ENCODE measurements at regions of chr11 and their contacts with region 1.

Region 1: GRCh38 chr11:128290106-128290840 is 297.1 kb downstream of the ETS1 start:
- DNase-seq: peak; percentile 69
- H3K4me3 Mint-ChIP-seq: peak overlapping the region; percentile 84
- H3K27ac Mint-ChIP-seq: peak overlapping the region; percentile 95
- H3K4me1 Mint-ChIP-seq: peaks cover 93% of the 10 kb centered on the region
- H3K27me3 Mint-ChIP-seq: no peaks in the 10 kb centered on the region

Region 2: GRCh38 chr11:127627629-127628457 is 662.4 kb before region 1 on chr11:
- intact Hi-C with region 1: no loop called
- DNase-seq: no peak
- H3K4me3 Mint-ChIP-seq: no peak overlapping the region
- H3K27ac Mint-ChIP-seq: no peak overlapping the region
- H3K4me1 Mint-ChIP-seq: no peaks in the 10 kb centered on the region
- H3K27me3 Mint-ChIP-seq: no peaks in the 10 kb centered on the region

Region 3: DNA sequence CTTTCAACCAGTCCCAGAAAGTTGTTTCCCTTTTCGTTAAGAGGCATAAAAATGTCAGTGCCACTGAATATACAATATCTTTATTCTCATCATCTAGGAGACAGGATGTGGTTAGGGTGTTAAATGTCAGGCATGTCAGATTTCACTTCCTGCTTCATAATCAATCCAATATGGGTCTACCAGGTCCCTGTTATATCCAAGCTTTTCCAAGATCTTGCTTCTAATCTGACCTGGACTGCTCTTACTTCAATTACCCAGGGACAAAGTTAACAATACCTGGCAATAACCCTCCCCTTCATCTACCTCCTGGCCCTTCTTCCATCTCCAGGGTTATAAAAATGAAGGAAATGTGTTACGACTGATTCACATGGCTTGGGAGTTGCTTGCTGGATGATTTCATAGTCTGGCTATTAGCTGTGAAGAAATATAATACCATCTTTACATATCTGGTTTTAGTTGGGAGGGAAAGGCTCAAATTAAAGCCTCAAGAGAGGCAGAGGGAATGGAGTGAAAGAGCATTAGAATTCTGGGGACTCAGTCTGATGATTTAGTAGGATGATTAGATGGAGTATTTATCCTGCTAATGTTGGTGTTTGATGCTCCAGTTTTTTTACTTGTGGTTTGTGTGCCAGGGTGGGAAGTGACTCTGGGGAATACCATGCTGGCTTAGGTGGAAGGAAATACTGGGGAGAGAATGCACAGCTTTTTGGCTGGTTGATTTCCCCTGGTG is 237.2 kb before region 1 on chr11:
- intact Hi-C with region 1: loop called (anchors 5 kb)
- DNase-seq: no peak
- H3K4me3 Mint-ChIP-seq: peak overlapping the region; percentile 48
- H3K27ac Mint-ChIP-seq: peak overlapping the region; percentile 76
- H3K4me1 Mint-ChIP-seq: peaks cover 56% of the 10 kb centered on the region
- H3K27me3 Mint-ChIP-seq: no peaks in the 10 kb centered on the region

Region 4: GRCh38 chr11:128195057-128195751 is 95.1 kb before region 1 on chr11:
- intact Hi-C with region 1: loop called (anchors 1 kb)
- DNase-seq: peak; percentile 26
- H3K4me3 Mint-ChIP-seq: no peak overlapping the region
- H3K27ac Mint-ChIP-seq: peak overlapping the region; percentile 29
- H3K4me1 Mint-ChIP-seq: peaks cover 42% of the 10 kb centered on the region
- H3K27me3 Mint-ChIP-seq: peaks cover 1% of the 10 kb centered on the region

Region 5: DNA sequence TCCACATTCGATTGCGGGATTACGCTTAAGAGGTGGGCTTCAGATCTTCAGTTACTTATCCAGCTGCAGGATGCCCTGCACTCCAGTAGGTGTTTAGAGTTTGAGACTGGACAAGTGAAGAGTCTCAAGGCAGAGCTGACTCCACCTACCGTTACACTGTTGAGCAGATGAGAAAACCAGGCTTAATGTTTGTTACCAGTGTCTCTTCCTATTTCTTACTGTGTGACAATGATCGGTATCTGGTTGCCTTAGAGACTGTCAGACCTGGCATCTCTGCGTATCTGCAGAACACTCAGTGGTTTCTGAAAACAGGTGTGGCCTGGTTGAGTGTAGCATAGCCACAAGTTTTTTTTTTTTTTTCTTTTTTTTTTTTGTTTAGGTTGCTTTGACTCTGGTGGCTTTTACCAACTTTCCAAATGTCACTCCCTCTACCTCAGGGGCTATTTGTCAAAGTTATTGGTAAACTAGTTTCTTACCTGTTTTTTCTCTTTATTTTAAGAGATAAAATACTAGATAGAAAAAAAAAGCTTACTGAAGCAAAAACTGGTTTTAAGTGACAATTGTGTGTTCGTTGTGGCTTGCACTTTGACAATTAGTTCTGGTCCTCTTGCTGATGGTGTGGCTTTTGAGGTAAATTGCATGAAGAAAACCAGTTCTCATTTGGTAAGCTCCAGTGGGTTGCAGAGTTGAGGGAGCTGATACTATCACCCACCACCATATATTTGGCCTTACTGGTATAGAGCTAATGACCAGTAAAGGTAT is 12.3 kb after region 1 on chr11:
- intact Hi-C with region 1: loop called (anchors 1 kb)
- DNase-seq: peak; percentile 82
- H3K4me3 Mint-ChIP-seq: peak overlapping the region; percentile 90
- H3K27ac Mint-ChIP-seq: peak overlapping the region; percentile 96
- H3K4me1 Mint-ChIP-seq: peaks cover 71% of the 10 kb centered on the region
- H3K27me3 Mint-ChIP-seq: no peaks in the 10 kb centered on the region

Region 6: GRCh38 chr11:128472128-128473089 is 182.1 kb after region 1 on chr11:
- intact Hi-C with region 1: loop called (anchors 1 kb)
- DNase-seq: peak; percentile 62
- H3K4me3 Mint-ChIP-seq: peak overlapping the region; percentile 75
- H3K27ac Mint-ChIP-seq: peak overlapping the region; percentile 95
- H3K4me1 Mint-ChIP-seq: peaks cover 94% of the 10 kb centered on the region
- H3K27me3 Mint-ChIP-seq: no peaks in the 10 kb centered on the region

Region 7: GRCh38 chr11:128630367-128631230 is 340.3 kb after region 1 on chr11:
- intact Hi-C with region 1: loop called (anchors 1 kb)
- DNase-seq: peak; percentile 81
- H3K4me3 Mint-ChIP-seq: peak overlapping the region; percentile 28
- H3K27ac Mint-ChIP-seq: peak overlapping the region; percentile 97
- H3K4me1 Mint-ChIP-seq: peaks cover 59% of the 10 kb centered on the region
- H3K27me3 Mint-ChIP-seq: no peaks in the 10 kb centered on the region

Region 8: DNA sequence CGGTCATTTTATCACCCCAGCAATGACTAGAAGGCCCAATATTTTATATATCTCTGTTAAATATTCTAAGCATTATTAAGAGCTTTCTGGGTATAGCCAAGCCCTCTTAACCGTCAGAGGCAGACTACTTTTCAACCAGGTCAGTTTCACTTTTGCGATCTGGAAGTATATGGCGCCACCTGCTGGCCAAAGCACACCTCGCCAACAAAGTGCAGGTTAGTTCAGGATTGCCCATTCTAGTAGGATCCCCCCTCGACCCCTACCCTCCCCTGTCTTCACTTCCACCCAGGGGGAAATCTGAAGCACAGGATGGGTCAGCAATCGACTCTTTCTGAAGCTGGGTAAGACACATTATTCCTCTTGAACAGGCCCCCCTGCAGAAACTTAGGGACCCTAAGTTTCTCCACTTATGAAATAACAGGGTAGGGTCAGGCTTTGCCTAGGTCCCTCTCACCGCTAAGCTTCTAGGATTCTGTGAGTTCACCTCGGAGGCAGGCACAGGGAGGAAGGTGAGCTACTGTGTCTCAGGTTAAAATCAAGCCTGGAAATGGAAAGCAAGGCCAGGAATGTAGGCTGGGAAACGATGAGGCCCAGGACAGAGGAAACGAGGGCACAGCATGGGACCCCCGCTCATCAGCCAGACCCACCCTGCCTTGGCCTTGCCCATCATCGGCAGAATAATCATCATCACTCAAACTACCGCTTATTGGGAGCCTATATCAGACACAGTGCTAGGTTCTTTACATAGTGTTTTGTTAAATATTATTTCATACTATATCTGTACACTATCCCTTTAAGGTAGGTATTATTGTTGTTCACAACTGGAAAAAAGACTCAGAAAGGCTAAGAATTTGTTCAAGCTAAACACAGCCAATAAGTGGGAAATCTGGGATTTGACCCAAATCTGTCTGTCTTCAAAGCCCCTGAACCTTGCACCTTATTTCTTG is 541.2 kb after region 1 on chr11:
- intact Hi-C with region 1: loop called (anchors 2 kb)
- DNase-seq: peak; percentile 75
- H3K4me3 Mint-ChIP-seq: peak overlapping the region; percentile 6
- H3K27ac Mint-ChIP-seq: peak overlapping the region; percentile 86
- H3K4me1 Mint-ChIP-seq: peaks cover 18% of the 10 kb centered on the region
- H3K27me3 Mint-ChIP-seq: peaks cover 5% of the 10 kb centered on the region

Measured in activated T-helper 2 cell treated with anti-CD3 and anti-CD28 coated beads, Interferon-gamma antibody, Interleukin-2, Interleukin-4, amounts not matched to agents 10 μg/mL and 5 μg/mL and 100 μg/mL, durations not matched to agents 14 hours and 24 hours and 36 hours (primary cell).